Activated CD4-positive, alpha-beta T cell treated with anti-CD3 and anti-CD28 coated beads for 36 hours (primary cell): ENCODE measurements at regions of chr12 and their contacts with region 1.

Region 1: DNA sequence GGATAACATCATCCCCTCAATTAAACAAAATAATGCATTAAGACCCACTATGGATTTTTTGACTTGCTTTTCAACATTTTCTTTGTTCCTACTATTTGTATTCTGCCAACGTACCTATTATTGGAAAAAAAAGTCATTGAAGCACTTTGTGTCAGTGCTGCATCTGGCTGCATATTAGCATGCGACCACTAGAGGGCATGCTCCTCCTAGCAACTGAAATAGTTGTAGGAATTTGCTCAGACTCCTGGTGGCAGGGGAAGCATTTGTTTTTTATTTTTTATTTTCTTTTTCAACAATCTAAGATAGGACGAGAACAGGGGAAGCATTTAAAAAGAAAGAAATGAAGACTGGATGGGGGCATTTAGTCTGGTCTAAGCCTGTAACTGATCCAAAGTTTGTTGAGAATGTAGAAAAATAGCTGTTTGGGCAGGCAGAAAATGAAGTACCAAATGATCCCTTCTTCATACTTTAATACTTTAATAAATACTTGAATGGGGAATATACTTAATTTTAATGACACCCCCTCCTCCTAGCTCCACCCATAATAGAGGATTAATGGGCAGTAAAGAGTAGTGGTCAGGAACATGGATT is 14.5 kb upstream of the CLEC4A start:
- DNase-seq: peak; percentile 89
- ATAC-seq: peak; percentile 85
- H3K4me3 Mint-ChIP-seq: no peak overlapping the region
- H3K27ac Mint-ChIP-seq: peak overlapping the region; percentile 22
- H3K4me1 Mint-ChIP-seq: peaks cover 3% of the 10 kb centered on the region
- H3K27me3 Mint-ChIP-seq: no peaks in the 10 kb centered on the region

Region 2: GRCh38 chr12:7129872-7130680 is 978.8 kb before region 1 on chr12 and contains the start of gene CLSTN3:
- CTCF ChIA-PET with region 1: no interaction called
- POLR2A ChIA-PET with region 1: no interaction called
- intact Hi-C with region 1: no loop called
- DNase-seq: peak; percentile 93
- ATAC-seq: peak; percentile 89
- H3K4me3 Mint-ChIP-seq: peak within 1 kb of the TSS; percentile 80
- H3K27ac Mint-ChIP-seq: peak within 1 kb of the TSS; percentile 74
- H3K4me1 Mint-ChIP-seq: peaks cover 31% of the 10 kb centered on the region
- H3K27me3 Mint-ChIP-seq: no peaks in the 10 kb centered on the region
- total RNA-seq, gene CLSTN3: 28.2 to 37.9 TPM

Region 3: GRCh38 chr12:7555752-7556151 is 553.2 kb before region 1 on chr12:
- CTCF ChIA-PET with region 1: no interaction called
- POLR2A ChIA-PET with region 1: no interaction called
- intact Hi-C with region 1: no loop called
- DNase-seq: no peak
- ATAC-seq: no peak
- H3K4me3 Mint-ChIP-seq: no peak overlapping the region
- H3K27ac Mint-ChIP-seq: no peak overlapping the region
- H3K4me1 Mint-ChIP-seq: no peaks in the 10 kb centered on the region
- H3K27me3 Mint-ChIP-seq: peaks cover 5% of the 10 kb centered on the region

Region 4: DNA sequence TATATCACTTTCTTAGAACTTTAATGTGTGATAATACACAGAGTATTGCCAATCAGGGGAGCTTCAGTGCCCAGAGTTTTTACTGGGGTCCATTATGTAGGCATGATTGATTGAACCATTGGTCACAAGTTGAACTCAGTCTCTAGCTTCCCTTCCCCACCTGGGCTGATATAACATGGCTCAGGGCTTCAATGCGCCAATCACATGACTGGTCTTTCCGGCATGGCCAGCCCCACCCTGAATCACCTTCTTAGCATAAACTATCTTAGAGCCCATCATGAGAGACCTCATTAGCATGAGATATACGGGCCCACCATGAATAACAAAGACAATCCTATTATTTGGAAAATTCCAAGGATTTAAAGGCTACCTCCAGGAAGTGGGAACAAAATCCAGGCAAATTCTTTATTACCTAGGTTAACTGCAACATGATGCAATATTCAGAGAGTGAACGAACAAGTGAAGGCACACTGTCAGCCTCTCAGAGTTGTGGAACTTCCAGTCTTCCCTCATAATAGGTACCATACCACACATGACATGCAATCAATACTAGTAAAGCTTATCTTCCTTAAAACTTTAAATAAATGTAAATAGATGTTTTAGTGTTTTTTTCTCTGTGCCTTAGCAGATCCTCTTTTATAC is 11.3 kb after region 1 on chr12:
- CTCF ChIA-PET with region 1: interaction called, 11 read pairs
- POLR2A ChIA-PET with region 1: no interaction called
- intact Hi-C with region 1: no loop called
- DNase-seq: no peak
- ATAC-seq: no peak
- H3K4me3 Mint-ChIP-seq: no peak overlapping the region
- H3K27ac Mint-ChIP-seq: no peak overlapping the region
- H3K4me1 Mint-ChIP-seq: no peaks in the 10 kb centered on the region
- H3K27me3 Mint-ChIP-seq: no peaks in the 10 kb centered on the region

Region 5: DNA sequence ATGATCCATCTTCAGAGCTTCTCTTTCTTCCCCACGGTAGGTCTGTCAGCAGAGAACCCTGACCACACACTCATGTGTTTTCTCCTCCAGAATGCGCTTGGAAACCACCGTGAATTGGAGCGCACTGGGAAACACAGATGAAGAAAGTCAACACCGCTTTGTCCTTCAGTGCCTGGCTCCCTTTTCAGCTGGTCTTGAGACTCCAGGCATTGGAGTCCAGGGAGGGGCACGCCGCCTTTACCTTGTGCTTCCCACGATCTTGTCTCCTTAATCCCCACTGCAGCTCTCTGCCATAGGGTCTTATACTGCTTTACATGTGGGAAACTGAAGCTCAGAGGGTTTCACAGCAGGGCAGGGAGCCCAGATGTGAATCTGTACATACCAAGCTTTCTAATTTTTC is 117.5 kb after region 1 on chr12:
- CTCF ChIA-PET with region 1: interaction called, 27 read pairs
- POLR2A ChIA-PET with region 1: no interaction called
- intact Hi-C with region 1: loop called (anchors 1 kb)
- DNase-seq: no peak
- ATAC-seq: no peak
- H3K4me3 Mint-ChIP-seq: no peak overlapping the region
- H3K27ac Mint-ChIP-seq: no peak overlapping the region
- H3K4me1 Mint-ChIP-seq: peaks cover 6% of the 10 kb centered on the region
- H3K27me3 Mint-ChIP-seq: peaks cover 4% of the 10 kb centered on the region